Left ventricle myocardium superior (tissue), 1 donor: ENCODE measurements at regions of chr7 and their contacts with region 1.

Region 1: GRCh38 chr7:108016841-108017775 is 14.1 kb upstream of the LAMB1 start:
- DNase-seq: no peak
- ATAC-seq: peak; percentile 67

Region 2: GRCh38 chr7:107471292-107472070 is 545.6 kb before region 1 on chr7:
- intact Hi-C with region 1: loop called (anchors 10 kb)
- DNase-seq: no peak
- ATAC-seq: peak; percentile 49